ENCODE measurements at regions of chr3 and their contacts with region 1.

Region 1: DNA sequence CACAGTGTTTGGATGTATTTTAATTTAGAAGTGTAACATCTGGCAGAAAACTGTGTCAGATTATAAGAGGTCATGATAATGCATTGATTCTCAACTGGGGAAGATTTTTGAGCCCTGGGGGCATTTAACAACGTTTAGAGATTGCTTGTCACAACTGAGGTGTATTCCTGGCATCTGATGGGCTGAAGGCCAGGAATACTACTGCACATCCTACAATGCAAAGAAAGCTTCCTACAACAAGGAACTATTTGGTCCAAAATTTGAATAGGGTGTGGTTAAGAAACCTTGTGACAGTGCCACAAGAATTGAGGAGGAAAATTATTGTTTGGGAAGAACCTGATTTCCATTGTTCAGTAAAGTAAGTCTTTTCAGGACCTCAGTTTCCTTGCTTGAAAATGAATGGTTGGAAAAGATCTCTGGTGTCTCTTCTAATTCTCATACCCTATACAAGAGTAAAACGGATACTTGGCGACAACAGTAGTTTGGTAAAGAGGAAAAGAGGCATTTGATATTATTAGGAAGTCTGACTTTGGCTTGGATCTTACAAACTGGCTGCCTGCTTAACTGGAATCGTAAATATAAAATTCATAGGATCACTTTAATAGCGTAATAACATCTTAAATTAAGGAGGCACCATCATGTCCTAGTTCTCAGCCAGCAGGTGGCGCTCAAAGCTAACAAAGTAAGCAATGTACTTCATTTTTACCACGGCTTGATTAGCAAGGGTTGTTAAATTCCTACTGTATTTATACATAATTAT is 4.3 kb downstream of the DAZL start:
- DNase-seq: peak; percentile 64 to 95 (median 90)
- H3K4me3 ChIP-seq: no peak overlapping the region
- H3K27ac ChIP-seq: no peak overlapping the region
- H3K4me1 ChIP-seq: no peaks in the 10 kb centered on the region
- H3K27me3 ChIP-seq: no peaks in the 10 kb centered on the region
- CTCF ChIP-seq: peak; percentile 80 to 93 (median 86)
- POLR2A ChIP-seq: no peak

Region 2: DNA sequence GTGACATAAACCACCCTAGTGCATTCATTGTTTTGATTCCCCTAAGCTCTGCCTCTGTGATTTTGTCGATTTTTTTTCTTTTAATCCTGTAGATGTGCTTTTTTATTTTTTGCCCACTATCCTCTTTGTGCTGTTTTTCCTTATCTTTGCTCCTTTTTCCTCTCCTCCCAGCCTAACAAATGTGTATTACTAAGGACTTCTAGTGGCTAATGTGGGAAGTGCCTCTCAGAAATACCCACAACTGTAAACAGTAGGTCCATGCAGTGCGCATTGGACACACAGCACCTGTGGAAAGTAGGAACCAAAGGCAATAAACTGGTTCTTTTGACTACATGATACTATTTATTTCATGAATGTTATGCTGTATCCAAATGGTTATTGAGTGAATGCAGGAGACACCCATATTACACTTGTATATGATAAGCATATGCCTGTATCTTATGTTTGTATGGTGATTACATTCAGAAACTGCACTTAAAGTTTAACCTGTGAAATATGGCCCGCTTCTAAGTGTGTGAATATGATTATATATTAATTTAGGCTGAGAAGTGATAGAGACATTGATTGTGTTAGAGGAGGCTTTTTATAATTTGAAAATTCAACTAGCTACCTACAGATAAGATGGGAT is 431.6 kb after region 1 on chr3:
- intact Hi-C with region 1: loop called in 1 of 2 experiments (anchors 10 kb)
- DNase-seq: no peak
- H3K4me3 ChIP-seq: no peak overlapping the region
- H3K27ac ChIP-seq: no peak overlapping the region
- H3K4me1 ChIP-seq: peaks cover 0 to 9% of the 10 kb centered on the region in 2 donors
- H3K27me3 ChIP-seq: no peaks in the 10 kb centered on the region
- CTCF ChIP-seq: peak; percentile 63 to 84 (median 76)
- POLR2A ChIP-seq: no peak

Region 3: DNA sequence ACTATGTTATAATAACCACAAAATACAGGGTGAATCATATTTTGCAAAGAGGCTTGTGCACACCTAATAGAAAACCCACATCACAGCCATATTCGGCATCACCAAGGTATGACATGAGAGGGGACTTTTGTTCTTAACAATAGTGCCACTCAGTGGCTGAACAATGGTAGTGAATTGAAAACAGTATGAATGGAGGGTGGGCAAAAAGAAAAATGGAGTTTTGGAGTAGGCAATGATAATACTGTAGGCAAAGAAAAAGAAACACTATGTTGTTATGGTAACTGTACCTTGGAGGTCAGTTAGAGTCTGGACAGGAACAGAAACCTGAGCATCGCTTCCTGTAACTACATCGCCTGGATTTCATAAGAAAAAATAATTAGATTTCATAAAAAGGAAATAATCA is 632.4 kb after region 1 on chr3:
- intact Hi-C with region 1: loop called (anchors 5 to 10 kb)
- DNase-seq: peak in 6 of 7 donors; percentile 11 to 22 (median 18)
- H3K4me3 ChIP-seq: no peak overlapping the region
- H3K27ac ChIP-seq: no peak overlapping the region
- H3K4me1 ChIP-seq: peaks cover 0 to 3% of the 10 kb centered on the region in 2 donors
- H3K27me3 ChIP-seq: no peaks in the 10 kb centered on the region
- CTCF ChIP-seq: peak; percentile 52 to 92 (median 80)
- POLR2A ChIP-seq: no peak

Region 4: DNA sequence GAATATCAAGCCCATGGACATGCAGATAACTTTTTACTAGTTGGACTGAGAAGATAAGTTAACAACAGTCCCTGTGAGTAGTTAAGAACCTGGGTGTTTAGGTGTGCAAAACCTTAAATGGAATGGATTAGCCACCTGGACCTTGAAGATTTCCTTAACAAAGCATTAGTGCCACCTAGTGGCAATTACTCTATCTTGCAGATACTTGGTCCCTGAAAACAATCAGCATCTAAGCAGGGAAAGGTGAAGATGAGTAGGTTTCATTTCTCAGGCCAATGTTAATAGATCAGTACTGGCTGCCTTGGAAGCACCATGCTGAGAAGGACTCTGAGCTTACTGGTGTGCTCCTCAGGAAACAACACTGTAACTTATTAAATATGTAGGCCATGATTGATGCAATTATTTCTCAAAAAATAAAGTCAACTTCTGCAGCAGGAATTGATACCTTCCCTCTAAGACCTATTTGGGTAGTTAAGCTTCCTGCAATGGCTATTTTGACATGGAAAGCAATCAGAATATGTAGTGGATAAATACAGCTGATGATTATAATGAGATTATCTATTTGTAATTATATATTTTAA is 812.1 kb after region 1 on chr3:
- intact Hi-C with region 1: loop called in 1 of 2 experiments (anchors 5 kb)
- DNase-seq: peak in 3 of 7 donors; percentile 17 to 23 (median 19)
- H3K4me3 ChIP-seq: no peak overlapping the region
- H3K27ac ChIP-seq: no peak overlapping the region
- H3K4me1 ChIP-seq: no peaks in the 10 kb centered on the region
- H3K27me3 ChIP-seq: no peaks in the 10 kb centered on the region
- CTCF ChIP-seq: peak; percentile 70 to 83 (median 79)
- POLR2A ChIP-seq: no peak